Activated T-helper 1 cell treated with anti-CD3 and anti-CD28 coated beads, Interleukin-12 subunit alpha, Interleukin-12 subunit beta, Interleukin-2, Interleukin-4 antibody, amounts not matched to agents 30 ng/mL and 10 ng/mL and 1 ng/mL, durations not matched to agents 14 hours and 24 hours and 36 hours (primary cell): ENCODE measurements at regions of chr12 and their contacts with region 1.

Region 1: DNA sequence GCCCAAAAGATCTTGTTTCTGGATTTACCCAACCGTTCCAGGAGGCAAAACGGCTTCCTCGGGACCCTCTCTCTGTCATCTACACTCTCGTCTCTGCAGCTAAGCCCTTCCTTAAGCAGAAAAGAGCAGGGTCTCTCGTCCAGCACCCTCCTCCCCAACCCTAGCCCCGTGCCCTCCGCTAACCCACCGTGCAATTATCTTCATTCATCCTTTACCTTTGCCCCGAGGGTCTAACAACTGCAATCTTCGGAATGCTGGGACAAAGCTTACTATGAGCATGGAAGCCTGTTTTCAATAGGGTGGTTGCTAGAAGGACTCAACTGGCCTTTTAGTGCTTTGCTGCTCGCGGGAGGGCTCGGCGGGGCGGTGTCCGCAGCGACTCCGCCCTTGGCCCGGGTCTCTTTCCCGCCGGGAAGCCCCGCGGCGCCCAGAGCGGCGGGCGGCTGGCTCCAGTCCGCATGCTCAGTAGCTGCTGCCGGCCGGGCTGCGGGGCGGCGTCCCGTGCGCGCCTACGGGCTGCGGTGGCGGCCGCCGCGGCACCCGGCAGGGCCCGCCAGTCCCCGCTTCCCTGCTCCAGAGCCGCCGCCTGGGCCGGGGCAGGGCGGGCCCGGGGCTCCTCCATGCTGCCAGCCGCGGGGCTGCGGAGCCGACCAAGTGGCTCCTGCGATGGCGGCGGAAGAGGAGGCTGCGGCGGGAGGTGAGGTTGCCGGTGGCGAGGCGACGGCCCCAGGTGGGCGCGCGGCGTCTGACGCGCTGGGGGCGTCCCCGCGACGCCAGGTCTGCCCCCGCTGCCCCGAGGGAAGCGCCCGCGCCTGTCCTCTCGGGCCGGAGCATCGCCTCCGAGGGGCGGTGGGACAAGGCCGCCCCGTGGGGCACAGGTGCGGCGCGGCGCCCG is at the start of gene BMAL2:
- DNase-seq: peak; percentile 46
- H3K4me3 Mint-ChIP-seq: peak within 1 kb of the TSS; percentile 99
- H3K27ac Mint-ChIP-seq: peak within 1 kb of the TSS; percentile 96
- H3K4me1 Mint-ChIP-seq: peaks cover 67% of the 10 kb centered on the region
- H3K27me3 Mint-ChIP-seq: no peaks in the 10 kb centered on the region
- total RNA-seq, gene BMAL2: 57.2 and 58.0 TPM in 2 replicates

Region 2: DNA sequence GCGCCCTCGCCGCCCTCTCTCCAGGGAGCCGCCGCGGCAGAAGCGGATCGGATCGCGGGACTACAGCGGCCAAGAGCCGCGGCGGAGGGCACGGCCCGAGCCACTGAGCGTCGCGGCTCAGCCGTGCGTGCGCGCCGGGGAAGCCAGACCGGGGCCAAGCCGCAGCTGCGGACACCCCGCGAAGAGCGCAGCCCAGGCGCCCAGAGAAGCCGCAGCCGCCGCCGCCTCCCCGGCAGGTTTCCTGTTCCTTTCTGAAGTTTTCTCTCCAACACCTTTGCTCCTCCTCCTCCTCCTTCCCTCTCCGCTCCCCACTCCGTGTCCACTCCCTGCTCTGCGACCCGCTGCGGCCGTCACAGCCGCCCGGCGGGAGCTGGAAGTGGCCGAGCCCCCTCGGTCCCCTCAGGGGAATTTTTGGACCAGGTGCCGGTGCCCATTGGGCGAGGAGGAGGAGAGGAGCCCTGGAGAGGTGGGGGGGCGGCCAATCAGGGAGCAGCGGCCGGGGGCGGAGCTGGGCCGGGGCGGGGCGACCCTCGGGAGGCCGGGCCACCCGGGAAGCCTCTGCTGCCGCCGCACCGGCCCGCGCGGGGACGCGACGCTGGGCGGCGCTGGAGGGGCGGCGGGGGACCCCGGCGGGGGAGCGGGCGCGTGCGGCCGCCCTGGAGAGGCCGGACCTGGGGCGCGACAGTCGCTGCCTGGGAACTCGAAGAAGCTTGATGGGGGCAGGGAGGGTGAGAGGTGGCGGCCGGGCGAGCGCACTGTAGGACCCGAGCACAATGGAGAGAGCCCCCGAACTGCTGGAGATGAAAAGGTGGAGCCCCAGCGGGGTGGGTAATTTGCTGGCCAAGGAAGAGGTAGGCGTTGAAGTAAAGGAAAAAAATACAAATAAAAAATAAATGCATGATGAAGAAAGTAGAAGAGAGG is 499.6 kb before region 1 on chr12 and contains the start of gene ITPR2:
- intact Hi-C with region 1: loop called (anchors 5 kb)
- DNase-seq: peak; percentile 89
- H3K4me3 Mint-ChIP-seq: peak within 1 kb of the TSS; percentile 99
- H3K27ac Mint-ChIP-seq: peak within 1 kb of the TSS; percentile 98
- H3K4me1 Mint-ChIP-seq: peaks cover 42% of the 10 kb centered on the region
- H3K27me3 Mint-ChIP-seq: peaks cover 5% of the 10 kb centered on the region
- total RNA-seq, gene ITPR2: 33.0 and 34.2 TPM in 2 replicates

Region 3: GRCh38 chr12:27179400-27180214 is 153.0 kb before region 1 on chr12:
- intact Hi-C with region 1: loop called (anchors 1 kb)
- DNase-seq: peak; percentile 25
- H3K4me3 Mint-ChIP-seq: peak overlapping the region; percentile 19
- H3K27ac Mint-ChIP-seq: peak overlapping the region; percentile 66
- H3K4me1 Mint-ChIP-seq: peaks cover 53% of the 10 kb centered on the region
- H3K27me3 Mint-ChIP-seq: no peaks in the 10 kb centered on the region

Region 4: GRCh38 chr12:27383429-27384260 is 51.0 kb after region 1 on chr12:
- intact Hi-C with region 1: loop called (anchors 1 kb)
- DNase-seq: peak; percentile 57
- H3K4me3 Mint-ChIP-seq: no peak overlapping the region
- H3K27ac Mint-ChIP-seq: no peak overlapping the region
- H3K4me1 Mint-ChIP-seq: peaks cover 7% of the 10 kb centered on the region
- H3K27me3 Mint-ChIP-seq: no peaks in the 10 kb centered on the region

Region 5: DNA sequence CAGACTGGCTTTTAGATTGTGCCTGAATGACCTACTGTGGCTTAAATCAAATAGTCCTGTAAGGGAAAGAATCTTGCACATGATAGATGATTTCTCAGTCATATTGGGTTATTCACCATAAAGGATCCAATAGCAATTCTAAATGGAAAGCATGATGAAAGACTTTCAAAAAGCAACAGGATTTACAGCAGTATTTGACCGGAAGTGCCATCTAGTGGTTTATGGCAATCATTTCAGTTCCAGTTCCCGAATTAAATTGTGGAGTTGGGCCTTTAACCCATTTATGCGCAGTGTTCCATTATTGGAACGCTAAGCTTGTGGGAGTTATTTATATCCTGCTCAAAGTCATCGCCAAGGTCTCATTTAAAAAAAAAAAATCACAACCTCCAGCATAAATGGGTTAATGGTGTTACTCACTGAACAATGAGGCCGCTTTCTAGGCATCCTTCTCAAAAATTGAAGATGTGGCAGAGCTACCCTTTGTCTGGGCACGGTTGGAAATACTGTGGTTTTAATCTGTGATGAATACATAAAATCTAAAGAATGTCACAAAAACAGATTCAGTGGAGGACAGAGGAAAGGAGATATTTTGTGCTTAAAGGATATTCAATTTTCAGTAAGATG is 302.8 kb after region 1 on chr12:
- intact Hi-C with region 1: loop called (anchors 2 kb)
- DNase-seq: no peak
- H3K4me3 Mint-ChIP-seq: no peak overlapping the region
- H3K27ac Mint-ChIP-seq: no peak overlapping the region
- H3K4me1 Mint-ChIP-seq: peaks cover 39% of the 10 kb centered on the region
- H3K27me3 Mint-ChIP-seq: peaks cover 2% of the 10 kb centered on the region

Region 6: GRCh38 chr12:29103539-29103974 is 1770.9 kb after region 1 on chr12:
- intact Hi-C with region 1: loop called (anchors 5 kb)
- DNase-seq: peak; percentile 58
- H3K4me3 Mint-ChIP-seq: peak overlapping the region; percentile 34
- H3K27ac Mint-ChIP-seq: peak overlapping the region; percentile 75
- H3K4me1 Mint-ChIP-seq: peaks cover 31% of the 10 kb centered on the region
- H3K27me3 Mint-ChIP-seq: peaks cover 10% of the 10 kb centered on the region